IMR-90 (cell line): ENCODE measurements at regions of chr5 and their contacts with region 1.

Region 1: DNA sequence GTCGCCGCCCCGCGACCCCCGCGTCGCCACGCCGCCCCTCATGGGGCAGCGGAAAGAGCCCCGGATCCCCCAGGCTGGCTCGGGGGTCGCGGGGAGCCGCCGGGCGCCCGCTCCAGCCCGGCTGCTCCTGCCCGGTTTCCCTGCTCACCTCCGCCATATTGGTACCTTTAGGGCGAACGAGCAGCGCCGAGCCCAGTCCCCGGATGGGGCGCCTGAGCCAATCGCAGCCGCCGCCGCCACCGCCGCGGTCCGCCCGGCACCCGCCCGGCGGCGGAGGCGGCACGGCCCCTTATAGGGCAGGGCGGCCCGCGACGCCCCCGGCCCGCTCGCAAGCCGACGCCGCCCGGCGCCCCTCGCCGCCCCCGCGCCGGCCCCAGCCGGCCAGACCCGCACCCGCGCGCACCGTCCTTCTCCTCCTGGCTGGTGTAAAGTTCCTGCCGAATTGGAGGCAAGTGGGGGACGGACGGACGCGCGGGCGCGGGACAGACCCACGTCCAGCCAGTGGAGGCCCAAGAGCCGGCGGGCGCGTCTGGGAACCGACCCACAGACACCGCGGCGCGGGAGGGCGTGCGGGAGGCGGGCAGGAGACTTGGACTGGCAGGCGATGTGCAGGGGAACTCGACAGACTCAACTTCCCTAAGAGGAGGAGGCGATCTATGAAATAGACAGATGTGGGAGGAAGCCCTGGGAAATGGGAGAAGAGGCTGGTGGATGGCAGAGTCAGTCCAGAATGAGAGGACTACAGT is at the start of gene MIER3:
- DNase-seq: peak; percentile 67
- ATAC-seq: peak; percentile 97
- H3K4me3 ChIP-seq: peak within 1 kb of the TSS; percentile 57
- H3K27ac ChIP-seq: peak within 1 kb of the TSS; percentile 70
- H3K4me1 ChIP-seq: peaks cover 2% of the 10 kb centered on the region; the same call in 1 of the 2 replicates
- H3K27me3 ChIP-seq: peaks cover 8% of the 10 kb centered on the region; the same call in 1 of the 2 replicates
- CTCF ChIP-seq: no peak
- POLR2A ChIP-seq: peak; percentile 76
- RAD21 ChIP-seq: no peak
- total RNA-seq, gene MIER3: 22.9 and 26.7 TPM in 2 replicates

Region 2: DNA sequence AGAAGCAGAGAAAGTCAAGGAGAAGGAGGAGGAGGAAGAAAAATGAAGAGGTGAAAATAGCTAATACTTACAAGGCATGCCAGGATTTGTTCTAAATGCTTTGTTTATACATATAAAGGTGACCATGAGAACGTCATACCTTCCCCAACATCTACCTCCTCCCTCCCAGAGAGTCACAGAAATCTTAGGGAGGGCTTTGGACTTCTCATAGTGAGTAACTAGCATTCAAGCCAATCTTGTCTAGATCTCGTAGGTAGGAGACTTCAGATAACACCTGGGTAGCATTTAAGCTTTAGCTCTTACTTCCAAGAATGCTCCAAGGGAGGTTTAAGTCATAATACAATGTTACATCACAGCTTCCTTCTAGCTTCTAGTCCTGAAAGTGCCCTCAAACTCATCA is 185.3 kb after region 1 on chr5:
- CTCF ChIA-PET with region 1: no interaction called
- POLR2A ChIA-PET with region 1: no interaction called
- dilution Hi-C with region 1: no loop called
- in situ Hi-C with region 1: no loop called
- intact Hi-C with region 1: loop called (anchors 5 kb)
- DNase-seq: no peak
- ATAC-seq: no peak
- H3K4me3 ChIP-seq: no peak overlapping the region
- H3K27ac ChIP-seq: no peak overlapping the region
- H3K4me1 ChIP-seq: no peaks in the 10 kb centered on the region
- H3K27me3 ChIP-seq: peaks cover 1% of the 10 kb centered on the region; the same call in 1 of the 2 replicates
- CTCF ChIP-seq: no peak
- POLR2A ChIP-seq: no peak
- RAD21 ChIP-seq: no peak